ENCODE measurements at regions of chr6 and their contacts with region 1.

Region 1: GRCh38 chr6:150813319-150813992 is 52.0 kb upstream of the MTHFD1L start:
- DNase-seq: no peak
- H3K4me3 ChIP-seq: no peak overlapping the region
- H3K27ac ChIP-seq: no peak overlapping the region; a peak in 1 of 4 replicates
- H3K4me1 ChIP-seq: peaks cover 0 to 8% of the 10 kb centered on the region in 2 experiments; a peak in 1 of 4 replicates
- H3K27me3 ChIP-seq: no peaks in the 10 kb centered on the region
- CTCF ChIP-seq: no peak
- EP300 ChIP-seq: no peak
- RAD21 ChIP-seq: no peak

Region 2: GRCh38 chr6:150079604-150080003 is 733.9 kb before region 1 on chr6:
- CTCF ChIA-PET with region 1: interaction called, 16 read pairs
- POLR2A ChIA-PET with region 1: no interaction called
- DNase-seq: no peak
- H3K4me3 ChIP-seq: no peak overlapping the region
- H3K27ac ChIP-seq: no peak overlapping the region
- H3K4me1 ChIP-seq: no peaks in the 10 kb centered on the region
- H3K27me3 ChIP-seq: peaks cover 11% of the 10 kb centered on the region; the same call in 1 of the 2 replicates
- CTCF ChIP-seq: no peak
- EP300 ChIP-seq: no peak
- RAD21 ChIP-seq: no peak

Region 3: DNA sequence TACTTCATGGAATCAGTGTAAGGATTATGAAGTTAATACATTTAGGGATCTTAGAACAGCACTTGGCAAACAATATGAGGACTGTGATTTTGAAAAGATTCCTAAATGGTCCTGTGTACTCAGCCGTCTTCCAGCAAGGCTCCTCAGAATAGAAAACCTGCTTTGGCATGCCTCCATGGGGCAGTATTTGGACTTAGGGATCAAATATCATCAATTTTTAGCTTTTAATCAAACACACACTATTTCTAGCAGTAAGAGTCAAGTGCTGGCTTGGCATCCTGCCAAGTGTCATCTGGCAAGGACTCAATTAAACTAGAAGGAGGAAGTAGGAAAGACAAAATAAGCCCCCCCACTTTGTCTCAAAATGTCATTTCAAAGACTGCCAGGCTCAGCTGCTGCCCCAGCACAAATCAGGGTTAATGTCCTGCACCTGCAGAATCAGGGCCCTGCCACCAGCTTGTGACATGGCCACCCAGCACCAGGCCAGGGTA is 403.8 kb before region 1 on chr6:
- CTCF ChIA-PET with region 1: interaction called, 17 read pairs
- POLR2A ChIA-PET with region 1: no interaction called
- DNase-seq: no peak
- H3K4me3 ChIP-seq: no peak overlapping the region
- H3K27ac ChIP-seq: no peak overlapping the region
- H3K4me1 ChIP-seq: no peaks in the 10 kb centered on the region; a peak in 1 of 4 replicates
- H3K27me3 ChIP-seq: no peaks in the 10 kb centered on the region
- CTCF ChIP-seq: no peak
- EP300 ChIP-seq: no peak
- RAD21 ChIP-seq: no peak

Region 4: GRCh38 chr6:150417899-150418826 is 395.3 kb before region 1 on chr6:
- CTCF ChIA-PET with region 1: interaction called, 76 read pairs
- POLR2A ChIA-PET with region 1: no interaction called
- DNase-seq: peak; percentile 36
- H3K4me3 ChIP-seq: peak overlapping the region; percentile 22 to 41; a peak in 2 of 4 replicates
- H3K27ac ChIP-seq: no peak overlapping the region
- H3K4me1 ChIP-seq: no peaks in the 10 kb centered on the region; a peak in 2 of 4 replicates
- H3K27me3 ChIP-seq: no peaks in the 10 kb centered on the region; the same call in 1 of the 2 replicates
- CTCF ChIP-seq: peak; percentile 74
- EP300 ChIP-seq: no peak
- RAD21 ChIP-seq: peak; percentile 64

Region 5: DNA sequence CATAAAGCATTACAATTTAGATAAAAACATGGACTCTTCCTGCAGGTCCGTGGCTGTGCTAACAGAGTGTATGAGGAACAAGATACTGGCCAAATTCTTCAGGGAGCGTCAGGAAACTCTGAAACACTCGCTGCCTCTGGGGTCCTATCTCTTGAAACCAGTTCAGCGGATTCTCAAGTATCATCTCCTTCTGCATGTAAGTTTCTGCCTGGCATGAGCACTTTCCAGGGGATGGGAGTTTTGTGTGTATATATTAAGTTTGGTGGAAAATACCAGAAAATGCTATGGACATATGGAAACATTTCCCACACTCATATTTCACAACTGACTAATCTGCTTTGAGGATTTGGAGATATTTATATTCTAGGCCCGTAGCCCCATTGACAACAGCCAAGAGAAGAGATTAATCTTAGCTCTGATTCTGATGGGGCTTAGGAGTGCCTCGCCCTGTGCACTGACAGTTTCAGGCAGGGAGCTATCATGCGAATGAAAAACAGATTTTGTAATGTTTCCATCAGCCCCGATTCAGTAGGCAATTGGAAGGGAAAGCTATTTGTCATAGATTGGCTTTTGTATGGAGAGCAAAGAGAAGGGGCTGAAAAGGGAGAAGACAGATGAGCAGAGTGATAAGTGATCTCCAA is 12.7 kb before region 1 on chr6:
- CTCF ChIA-PET with region 1: interaction called, 10 read pairs
- POLR2A ChIA-PET with region 1: no interaction called
- DNase-seq: no peak
- H3K4me3 ChIP-seq: no peak overlapping the region
- H3K27ac ChIP-seq: no peak overlapping the region
- H3K4me1 ChIP-seq: peaks cover 0 to 4% of the 10 kb centered on the region in 2 experiments; a peak in 1 of 4 replicates
- H3K27me3 ChIP-seq: no peaks in the 10 kb centered on the region
- CTCF ChIP-seq: no peak
- EP300 ChIP-seq: no peak
- RAD21 ChIP-seq: no peak

Region 6: GRCh38 chr6:150865406-150866146 is 52.1 kb after region 1 on chr6 and contains the start of gene MTHFD1L:
- CTCF ChIA-PET with region 1: interaction called, 11 read pairs
- POLR2A ChIA-PET with region 1: interaction called, 3 read pairs
- DNase-seq: peak; percentile 93
- H3K4me3 ChIP-seq: peak within 1 kb of the TSS; percentile 64 to 75
- H3K27ac ChIP-seq: peak within 1 kb of the TSS; percentile 89 to 95
- H3K4me1 ChIP-seq: peaks cover 0 to 11% of the 10 kb centered on the region in 2 experiments; a peak in 2 of 4 replicates
- H3K27me3 ChIP-seq: no peaks in the 10 kb centered on the region
- CTCF ChIP-seq: peak; percentile 60
- EP300 ChIP-seq: no peak
- RAD21 ChIP-seq: 0 out of 2 replicates have a peak, but pooled peaks have one; percentile 14
- polyA plus RNA-seq, gene MTHFD1L: 36.7 and 37.0 TPM in 2 replicates

Region 7: DNA sequence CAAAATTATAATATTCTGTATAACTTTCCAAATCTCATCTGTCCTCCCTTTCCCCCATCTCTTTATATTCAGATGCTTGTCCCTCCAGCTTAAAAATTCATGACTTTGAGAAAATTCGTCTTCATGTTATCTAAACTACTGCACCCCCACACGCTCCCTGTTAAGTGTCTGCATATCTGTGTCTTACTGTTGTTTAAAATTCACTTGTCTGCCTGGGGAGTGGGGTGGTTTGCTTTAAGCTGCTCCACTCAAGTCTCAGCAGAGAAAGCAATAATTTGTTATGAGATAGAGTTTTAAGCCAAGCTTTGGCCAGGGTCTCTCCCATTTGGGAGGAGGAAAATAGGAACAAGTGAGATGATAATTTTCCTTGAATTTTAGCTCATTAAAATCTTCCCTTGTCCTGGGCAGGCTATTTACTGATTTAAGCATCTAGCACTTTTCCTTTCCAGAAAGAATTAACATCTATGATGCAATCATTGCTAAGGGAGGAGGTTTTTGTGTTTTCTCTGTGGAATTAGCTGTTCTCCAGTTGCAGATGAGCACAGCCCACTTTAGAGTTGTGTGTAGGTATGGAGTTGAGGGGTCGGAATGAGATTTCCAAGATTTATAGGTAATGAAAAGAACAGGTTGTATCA is 88.8 kb after region 1 on chr6:
- CTCF ChIA-PET with region 1: no interaction called
- POLR2A ChIA-PET with region 1: no interaction called
- DNase-seq: no peak
- H3K4me3 ChIP-seq: no peak overlapping the region
- H3K27ac ChIP-seq: no peak overlapping the region
- H3K4me1 ChIP-seq: peaks cover 0 to 7% of the 10 kb centered on the region in 2 experiments; a peak in 1 of 4 replicates
- H3K27me3 ChIP-seq: no peaks in the 10 kb centered on the region
- CTCF ChIP-seq: no peak
- EP300 ChIP-seq: no peak
- RAD21 ChIP-seq: no peak

Region 8: GRCh38 chr6:151335930-151336329 is 522.5 kb after region 1 on chr6:
- CTCF ChIA-PET with region 1: interaction called, 21 read pairs
- POLR2A ChIA-PET with region 1: no interaction called
- DNase-seq: no peak
- H3K4me3 ChIP-seq: no peak overlapping the region
- H3K27ac ChIP-seq: no peak overlapping the region
- H3K4me1 ChIP-seq: no peaks in the 10 kb centered on the region; a peak in 1 of 4 replicates
- H3K27me3 ChIP-seq: no peaks in the 10 kb centered on the region
- CTCF ChIP-seq: no peak
- EP300 ChIP-seq: no peak
- RAD21 ChIP-seq: no peak